ENCODE measurements at regions of chr12 and their contacts with region 1.

Region 1: GRCh38 chr12:68617160-68617926 is 6.6 kb downstream of the RAP1B start:
- DNase-seq: no peak
- H3K4me3 ChIP-seq: no peak overlapping the region
- H3K27ac ChIP-seq: peak overlapping the region in 2 of 4 donors; percentile 4 to 95
- H3K4me1 ChIP-seq: peaks cover 0 to 100% (median 99%) of the 10 kb centered on the region in 4 donors
- H3K27me3 ChIP-seq: no peaks in the 10 kb centered on the region
- CTCF ChIP-seq: no peak
- EP300 ChIP-seq: no peak
- POLR2A ChIP-seq: no peak

Region 2: GRCh38 chr12:68665016-68665569 is 47.8 kb after region 1 on chr12:
- intact Hi-C with region 1: loop called (anchors 5 kb)
- DNase-seq: no peak
- H3K4me3 ChIP-seq: no peak overlapping the region
- H3K27ac ChIP-seq: peak overlapping the region in 1 of 4 donors; percentile 20
- H3K4me1 ChIP-seq: peaks cover 0 to 7% (median 0%) of the 10 kb centered on the region in 4 donors
- H3K27me3 ChIP-seq: no peaks in the 10 kb centered on the region
- CTCF ChIP-seq: no peak
- EP300 ChIP-seq: no peak
- POLR2A ChIP-seq: no peak

Measured in sigmoid colon (tissue), 7 donors.